ENCODE measurements at regions of chr9 and their contacts with region 1.

Region 1: GRCh38 chr9:114385412-114386181 is 2.2 kb downstream of the AKNA start:
- DNase-seq: peak; percentile 94
- ATAC-seq: peak; percentile 79
- H3K4me3 Mint-ChIP-seq: peak overlapping the region; percentile 99
- H3K27ac Mint-ChIP-seq: peak overlapping the region; percentile 99
- H3K4me1 Mint-ChIP-seq: peaks cover 58% of the 10 kb centered on the region
- H3K27me3 Mint-ChIP-seq: no peaks in the 10 kb centered on the region

Region 2: DNA sequence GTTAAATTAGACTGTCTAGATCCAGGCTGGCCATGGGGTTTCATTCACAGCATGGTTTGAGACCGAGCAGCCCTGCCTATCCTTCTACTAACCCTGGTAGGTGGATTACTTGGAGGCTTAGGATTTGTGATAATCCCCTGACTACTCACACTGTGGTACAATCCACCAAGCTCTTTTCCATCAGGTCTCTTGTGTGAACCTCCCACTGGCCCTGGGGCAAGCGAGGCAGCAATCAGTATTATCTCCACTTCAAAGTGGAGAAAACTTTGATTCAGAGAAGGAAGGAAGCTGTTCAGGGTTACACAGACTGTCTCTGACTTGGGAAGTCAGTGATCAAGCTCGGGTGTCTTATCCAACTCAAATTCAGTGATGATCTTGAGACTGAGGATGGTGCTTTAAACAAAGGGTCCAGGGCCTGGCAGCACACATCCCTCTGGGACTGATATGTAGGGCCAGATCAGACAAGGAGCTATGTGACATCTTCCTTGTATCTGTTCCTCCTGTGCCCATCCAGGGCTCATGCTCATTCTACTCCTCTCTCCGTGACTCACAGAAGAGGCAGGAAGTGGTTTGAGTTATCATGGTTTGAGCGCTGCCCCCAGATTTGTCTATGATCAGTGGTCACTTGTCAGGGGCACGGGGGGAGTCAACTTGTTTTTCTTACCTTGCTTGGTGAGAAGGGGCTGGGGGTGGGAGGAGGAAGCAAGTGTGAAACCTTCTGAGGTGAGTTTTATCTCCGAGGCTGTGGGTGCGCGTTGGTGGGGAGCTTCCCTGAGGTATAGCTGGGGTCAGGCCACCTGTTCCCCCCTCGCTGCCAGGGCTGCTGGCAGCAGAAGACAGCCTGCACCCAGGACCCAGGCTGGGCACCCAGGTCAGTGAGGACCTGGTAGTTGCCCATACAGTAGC is 873.5 kb before region 1 on chr9:
- CTCF ChIA-PET with region 1: no interaction called
- POLR2A ChIA-PET with region 1: no interaction called
- intact Hi-C with region 1: loop called in 1 of 2 experiments (anchors 10 kb)
- DNase-seq: peak; percentile 84
- ATAC-seq: peak; percentile 72
- H3K4me3 Mint-ChIP-seq: peak overlapping the region; percentile 57
- H3K27ac Mint-ChIP-seq: peak overlapping the region; percentile 93
- H3K4me1 Mint-ChIP-seq: peaks cover 58% of the 10 kb centered on the region
- H3K27me3 Mint-ChIP-seq: no peaks in the 10 kb centered on the region

Region 3: DNA sequence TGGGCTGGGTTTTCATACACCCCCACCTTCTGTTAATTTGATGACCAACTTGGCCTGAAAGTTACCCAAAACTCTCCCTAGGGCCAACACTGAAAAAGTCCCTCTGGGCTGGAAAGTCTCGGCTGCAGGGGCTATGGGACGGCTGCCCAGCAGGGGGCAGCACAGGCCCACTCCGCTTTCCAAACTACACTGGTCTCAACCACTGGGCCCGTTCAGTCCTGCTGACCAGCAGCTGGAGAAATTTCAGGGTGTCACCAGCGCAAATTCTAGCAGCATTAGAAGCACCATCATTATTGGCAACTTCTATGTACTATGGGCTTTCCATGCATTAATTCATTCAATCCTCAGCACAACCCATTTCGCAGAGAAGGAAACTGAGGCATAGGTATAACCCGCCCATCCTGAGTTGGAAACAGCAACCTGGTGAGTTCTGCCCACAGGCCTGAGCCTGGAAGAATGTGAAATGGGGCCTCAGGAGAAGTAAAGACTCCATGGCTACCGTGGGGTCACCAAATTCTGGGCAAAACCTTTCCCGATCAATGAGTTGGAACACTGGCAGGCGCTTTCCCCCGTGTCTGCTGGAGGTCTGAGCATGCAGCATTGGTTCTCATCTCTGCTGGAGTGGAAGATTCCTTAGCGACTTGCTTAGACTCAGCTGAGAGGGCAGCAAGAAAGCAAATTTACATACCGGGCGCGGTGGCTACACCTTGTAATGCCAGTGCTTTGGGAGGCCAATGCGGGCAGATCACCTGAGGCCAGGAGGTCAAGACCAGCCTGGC is 46.3 kb before region 1 on chr9:
- CTCF ChIA-PET with region 1: interaction called, 34 read pairs
- POLR2A ChIA-PET with region 1: interaction called, 3 read pairs
- intact Hi-C with region 1: loop called (anchors 1 to 2 kb)
- DNase-seq: peak; percentile 74
- ATAC-seq: peak; percentile 71
- H3K4me3 Mint-ChIP-seq: no peak overlapping the region
- H3K27ac Mint-ChIP-seq: peak overlapping the region; percentile 51
- H3K4me1 Mint-ChIP-seq: peaks cover 3% of the 10 kb centered on the region
- H3K27me3 Mint-ChIP-seq: no peaks in the 10 kb centered on the region

Region 4: GRCh38 chr9:114366334-114367128 is 19.1 kb before region 1 on chr9:
- CTCF ChIA-PET with region 1: interaction called, 34 read pairs
- POLR2A ChIA-PET with region 1: interaction called, 22 read pairs
- intact Hi-C with region 1: loop called (anchors 1 kb)
- DNase-seq: peak; percentile 69
- ATAC-seq: peak; percentile 72
- H3K4me3 Mint-ChIP-seq: peak overlapping the region; percentile 16
- H3K27ac Mint-ChIP-seq: peak overlapping the region; percentile 84
- H3K4me1 Mint-ChIP-seq: peaks cover 82% of the 10 kb centered on the region
- H3K27me3 Mint-ChIP-seq: no peaks in the 10 kb centered on the region

Region 5: GRCh38 chr9:114397848-114398605 is 12.4 kb after region 1 on chr9:
- CTCF ChIA-PET with region 1: interaction called, 16 read pairs
- POLR2A ChIA-PET with region 1: interaction called, 9 read pairs
- intact Hi-C with region 1: loop called (anchors 1 kb)
- DNase-seq: peak; percentile 98
- ATAC-seq: peak; percentile 87
- H3K4me3 Mint-ChIP-seq: peak overlapping the region; percentile 93
- H3K27ac Mint-ChIP-seq: peak overlapping the region; percentile 89
- H3K4me1 Mint-ChIP-seq: peaks cover 46% of the 10 kb centered on the region
- H3K27me3 Mint-ChIP-seq: no peaks in the 10 kb centered on the region

Region 6: GRCh38 chr9:114653556-114654159 is 268.1 kb after region 1 on chr9:
- CTCF ChIA-PET with region 1: interaction called, 14 read pairs
- POLR2A ChIA-PET with region 1: no interaction called
- intact Hi-C with region 1: no loop called
- DNase-seq: peak; percentile 89
- ATAC-seq: peak; percentile 83
- H3K4me3 Mint-ChIP-seq: no peak overlapping the region
- H3K27ac Mint-ChIP-seq: peak overlapping the region; percentile 14
- H3K4me1 Mint-ChIP-seq: peaks cover 26% of the 10 kb centered on the region
- H3K27me3 Mint-ChIP-seq: no peaks in the 10 kb centered on the region

Region 7: DNA sequence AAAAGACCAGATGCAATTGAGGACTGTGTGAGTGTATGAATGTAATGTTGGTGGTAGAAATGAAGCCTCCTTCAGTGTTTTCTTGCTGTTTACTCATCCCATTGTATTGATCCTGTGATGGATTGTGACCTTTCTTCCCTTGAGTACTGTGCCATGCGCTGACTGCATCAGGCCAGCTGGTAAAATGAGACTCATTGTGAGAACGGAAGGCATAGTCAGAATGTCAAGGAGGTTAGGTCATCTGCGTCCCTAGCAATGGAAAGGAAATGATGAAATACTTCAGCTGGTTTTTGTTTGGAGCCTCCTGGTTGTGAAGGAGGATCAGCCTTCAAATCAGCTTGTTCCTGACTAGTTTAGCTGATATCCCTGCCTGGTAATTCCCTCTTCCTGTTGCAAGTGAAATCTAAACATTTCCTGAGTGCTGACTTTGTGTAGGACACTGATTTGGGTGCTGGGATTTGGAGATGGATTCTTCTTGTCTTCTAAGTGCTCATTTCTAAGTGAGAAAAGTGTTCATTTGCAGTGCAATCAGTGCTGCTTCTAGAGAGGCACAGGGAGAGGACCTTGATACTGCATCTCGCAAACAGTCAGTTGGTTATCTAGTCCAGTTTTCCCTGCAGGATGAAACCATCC is 509.3 kb after region 1 on chr9:
- CTCF ChIA-PET with region 1: no interaction called
- POLR2A ChIA-PET with region 1: no interaction called
- intact Hi-C with region 1: loop called (anchors 10 kb)
- DNase-seq: peak; percentile 77
- ATAC-seq: peak; percentile 76
- H3K4me3 Mint-ChIP-seq: peak overlapping the region; percentile 14
- H3K27ac Mint-ChIP-seq: peak overlapping the region; percentile 90
- H3K4me1 Mint-ChIP-seq: peaks cover 21% of the 10 kb centered on the region
- H3K27me3 Mint-ChIP-seq: no peaks in the 10 kb centered on the region